ENCODE measurements at regions of chr1 and their contacts with region 1.

Region 1: DNA sequence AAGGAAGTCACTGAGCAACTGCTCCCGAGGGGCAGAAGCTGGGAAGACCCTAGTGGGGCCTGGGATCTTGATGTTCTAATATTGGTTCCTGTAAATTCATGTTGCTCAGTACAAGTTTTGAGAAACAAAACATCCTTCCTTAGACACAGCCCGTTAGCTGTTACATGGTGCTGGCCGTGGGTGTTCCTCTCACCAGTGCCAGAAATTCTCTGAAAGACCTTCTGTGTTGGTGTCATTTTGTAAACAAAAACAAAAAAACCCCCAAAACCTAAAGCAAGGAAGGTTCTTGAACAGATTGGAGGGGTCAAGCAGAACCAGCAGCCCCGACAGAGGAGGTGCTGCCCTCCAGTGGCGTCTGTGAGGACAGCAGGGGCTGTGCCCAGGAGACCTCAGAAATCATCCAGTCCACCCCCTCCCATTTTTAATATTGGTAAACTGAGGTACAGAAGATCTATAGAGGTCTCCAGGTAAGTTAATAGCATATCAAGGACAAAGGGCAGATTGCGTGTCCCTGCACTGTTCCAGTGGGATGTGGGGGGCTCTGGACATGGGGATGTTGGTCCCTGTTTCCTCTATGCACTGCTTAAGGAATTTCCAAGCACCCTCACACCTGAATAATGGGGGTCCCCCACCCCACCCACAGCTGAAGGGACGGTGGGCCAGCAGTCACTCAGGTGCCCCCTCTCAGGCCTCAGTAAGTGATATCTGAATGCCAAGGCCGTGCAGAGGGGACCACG is 38.2 kb downstream of the SLC2A7 start:
- DNase-seq: peak; percentile 50 to 83 (median 73)
- ATAC-seq: peak; percentile 58 to 63
- H3K4me3 Mint-ChIP-seq: peak overlapping the region; percentile 46 to 85 (median 70)
- H3K27ac Mint-ChIP-seq: peak overlapping the region; percentile 92 to 97 (median 95)
- H3K4me1 Mint-ChIP-seq: peaks cover 18 to 44% (median 40%) of the 10 kb centered on the region in 4 donors
- H3K27me3 Mint-ChIP-seq: no peaks in the 10 kb centered on the region

Region 2: GRCh38 chr1:8925406-8925805 is 62.6 kb before region 1 on chr1:
- POLR2A ChIA-PET with region 1: interaction called, 361 read pairs
- DNase-seq: no peak
- ATAC-seq: no peak
- H3K4me3 Mint-ChIP-seq: no peak overlapping the region
- H3K27ac Mint-ChIP-seq: no peak overlapping the region
- H3K4me1 Mint-ChIP-seq: peaks cover 16 to 44% (median 28%) of the 10 kb centered on the region in 4 donors
- H3K27me3 Mint-ChIP-seq: no peaks in the 10 kb centered on the region

Region 3: DNA sequence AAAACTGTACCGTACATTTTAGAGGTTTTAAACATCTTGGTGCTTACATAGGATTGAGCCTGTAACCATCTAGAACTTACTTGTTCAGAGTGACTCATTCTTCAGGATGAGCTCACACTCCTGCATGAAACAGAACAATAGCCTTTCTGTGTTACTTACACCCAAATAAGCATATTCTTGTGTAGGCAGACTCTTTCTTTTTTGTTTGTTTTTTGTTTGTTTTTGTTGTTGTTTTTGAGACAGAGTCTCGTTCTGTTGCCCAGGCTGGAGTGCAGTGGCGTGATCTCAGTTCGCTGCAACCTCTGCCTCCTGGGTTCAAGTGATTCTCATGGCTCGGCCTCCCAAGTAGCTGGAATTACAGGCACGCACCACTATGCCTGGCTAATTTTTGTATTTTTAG is 46.1 kb before region 1 on chr1:
- POLR2A ChIA-PET with region 1: interaction called, 13 read pairs
- DNase-seq: no peak
- ATAC-seq: peak in 1 of 2 donors; percentile 33
- H3K4me3 Mint-ChIP-seq: peak overlapping the region in 5 of 10 donors; percentile 18 to 84 (median 73)
- H3K27ac Mint-ChIP-seq: peak overlapping the region in 9 of 10 donors; percentile 55 to 95 (median 87)
- H3K4me1 Mint-ChIP-seq: peaks cover 58 to 96% (median 92%) of the 10 kb centered on the region in 4 donors
- H3K27me3 Mint-ChIP-seq: no peaks in the 10 kb centered on the region

Region 4: DNA sequence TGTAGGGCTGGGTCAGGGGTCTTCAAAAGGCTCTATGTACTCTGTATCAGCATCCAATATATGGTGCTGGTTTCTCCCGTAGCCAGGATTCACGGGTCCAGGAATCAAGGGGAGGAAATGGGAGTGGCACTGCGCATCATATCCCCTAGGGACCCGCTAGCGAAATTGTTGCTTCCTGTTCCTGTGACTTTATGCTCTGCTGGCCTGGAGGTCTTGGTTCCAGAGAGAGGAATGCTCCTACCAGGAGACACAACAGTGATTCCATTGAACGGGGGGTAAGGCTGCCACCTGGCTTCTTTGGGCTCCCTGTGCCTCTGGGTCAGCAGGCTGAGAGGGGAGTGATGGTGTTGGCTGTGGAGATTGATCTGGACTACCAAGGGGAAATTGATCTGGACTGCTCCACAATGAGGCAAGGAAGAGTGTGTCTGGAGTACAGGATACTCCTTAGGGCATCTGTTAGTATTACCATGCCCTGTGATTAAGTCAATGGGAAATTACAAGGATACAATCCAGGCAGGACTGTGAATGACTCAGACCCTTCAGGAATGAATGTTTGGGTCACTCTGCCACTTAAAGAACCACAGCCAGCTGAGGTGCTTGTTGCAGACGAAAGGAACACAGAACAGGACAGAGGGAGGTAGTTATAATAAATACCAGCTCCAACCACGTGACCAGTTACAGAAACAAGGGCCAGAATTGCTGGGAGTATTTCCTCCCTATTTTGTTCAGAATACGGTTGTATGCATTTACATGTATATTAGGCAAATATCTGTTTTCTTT is 314.9 kb after region 1 on chr1:
- POLR2A ChIA-PET with region 1: no interaction called
- DNase-seq: no peak
- ATAC-seq: no peak
- H3K4me3 Mint-ChIP-seq: no peak overlapping the region
- H3K27ac Mint-ChIP-seq: no peak overlapping the region
- H3K4me1 Mint-ChIP-seq: peaks cover 2 to 14% (median 7%) of the 10 kb centered on the region in 4 donors
- H3K27me3 Mint-ChIP-seq: peaks cover 0 to 5% (median 0%) of the 10 kb centered on the region in 5 donors

Measured in naive thymus-derived CD8-positive, alpha-beta T cell (primary cell).